Cardiac septum (tissue), 1 donor: ENCODE measurements at regions of chr3 and their contacts with region 1.

Region 1: GRCh38 chr3:49802719-49803464 is at the start of gene INKA1:
- DNase-seq: peak; percentile 97
- total RNA-seq, gene INKA1: 1.9 TPM

Region 2: GRCh38 chr3:49775538-49775937 is 27.4 kb before region 1 on chr3:
- intact Hi-C with region 1: no loop called
- DNase-seq: no peak

Region 3: DNA sequence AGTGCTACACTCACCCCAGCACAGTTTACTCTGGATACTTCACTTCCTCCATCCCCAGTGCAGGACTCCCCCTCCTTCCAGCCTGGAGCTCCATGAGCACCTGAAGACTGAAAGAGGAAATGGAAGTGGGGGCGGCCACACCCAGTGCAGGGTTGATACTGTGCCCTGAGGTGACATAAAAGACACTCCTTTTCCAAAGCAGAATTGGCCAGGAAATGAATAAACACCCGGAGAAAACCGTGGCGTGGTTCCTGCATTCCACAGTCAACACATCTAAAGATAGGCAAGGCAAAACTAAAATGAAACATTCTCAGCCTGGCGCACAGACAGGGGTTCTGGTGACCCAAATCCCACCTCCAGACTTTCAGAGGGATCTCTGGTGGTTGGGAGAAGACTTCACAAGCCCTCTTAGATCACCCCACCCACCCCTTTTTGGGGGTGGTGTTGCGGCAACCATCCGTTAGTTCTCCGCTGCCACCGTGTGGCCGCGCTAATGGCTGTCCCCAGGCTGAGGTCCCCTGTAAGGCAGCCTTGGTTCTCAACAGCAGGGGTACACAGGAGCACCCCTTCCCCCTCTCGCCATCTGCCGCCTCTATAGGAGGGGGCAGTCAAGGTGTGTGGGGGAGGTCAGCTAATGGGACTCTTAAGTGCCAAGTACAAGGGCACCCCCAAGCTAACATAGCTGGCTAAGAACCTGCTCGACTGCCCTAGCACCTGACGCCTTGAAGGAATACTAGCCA is 103.3 kb after region 1 on chr3:
- intact Hi-C with region 1: loop called (anchors 2 kb)
- DNase-seq: no peak

Region 4: DNA sequence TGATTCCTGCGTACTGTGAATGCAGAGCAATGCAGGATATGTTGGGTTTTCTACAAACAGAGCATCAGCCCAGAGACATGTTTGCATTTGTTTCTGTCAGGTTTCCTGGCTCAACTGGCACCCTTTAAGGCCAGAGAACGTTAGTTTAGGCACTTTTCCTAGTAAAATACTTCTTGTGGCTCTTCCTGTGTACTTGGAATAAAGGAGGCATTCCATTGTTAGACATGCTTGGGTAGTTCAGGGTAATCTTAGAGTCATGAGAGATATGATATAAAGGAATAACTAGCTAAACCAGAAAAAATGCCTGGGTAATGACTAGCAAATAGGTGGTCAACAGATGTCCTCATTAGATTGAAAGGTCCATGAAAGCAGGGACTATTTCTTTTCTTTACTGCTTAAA is 225.4 kb after region 1 on chr3:
- intact Hi-C with region 1: no loop called
- DNase-seq: no peak

Region 5: DNA sequence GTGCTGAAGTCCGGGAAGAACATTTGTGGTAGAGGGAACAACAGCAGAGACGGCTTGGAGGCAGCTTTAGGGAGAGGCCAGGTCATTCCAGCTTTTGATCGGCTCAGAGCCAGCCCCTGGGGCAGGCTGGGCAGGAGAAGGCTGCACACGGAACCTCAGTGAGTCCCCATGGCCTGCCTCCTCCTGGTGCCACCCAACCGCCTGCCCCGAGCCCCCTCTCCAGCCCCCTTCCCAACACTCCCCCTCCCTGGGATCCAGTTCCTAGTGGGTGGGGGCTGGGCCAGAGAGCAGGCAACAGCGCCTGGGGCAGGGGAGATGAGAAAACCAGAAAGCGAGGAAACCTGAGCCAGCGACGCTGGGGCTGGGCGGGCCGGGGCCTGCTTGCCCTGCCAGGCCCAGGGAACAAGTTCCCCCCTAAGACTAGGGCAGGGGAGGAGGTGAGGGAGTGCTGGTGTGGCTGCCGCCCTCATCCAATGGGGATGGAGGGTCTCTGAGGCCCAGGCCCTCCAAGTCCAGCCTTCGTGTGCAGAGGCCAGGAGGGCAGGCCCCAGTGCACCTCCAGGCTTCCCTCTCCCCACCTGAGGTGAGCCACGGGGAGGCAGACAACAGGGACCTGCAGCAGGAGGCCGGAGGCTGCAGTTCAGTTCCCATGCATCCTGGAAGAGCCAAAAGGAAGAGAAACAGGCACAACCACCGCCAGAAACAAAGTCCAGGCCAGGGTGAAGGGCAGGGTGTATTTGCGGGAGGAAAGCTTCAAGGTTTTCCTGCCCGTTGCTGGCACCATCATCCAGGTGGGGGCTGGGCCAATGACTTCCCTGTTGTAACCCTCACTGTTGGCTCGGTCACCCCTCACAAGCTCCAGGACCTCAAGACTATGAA is 348.2 kb after region 1 on chr3:
- intact Hi-C with region 1: no loop called
- DNase-seq: no peak